ENCODE measurements at regions of chr4 and their contacts with region 1.

Region 1: DNA sequence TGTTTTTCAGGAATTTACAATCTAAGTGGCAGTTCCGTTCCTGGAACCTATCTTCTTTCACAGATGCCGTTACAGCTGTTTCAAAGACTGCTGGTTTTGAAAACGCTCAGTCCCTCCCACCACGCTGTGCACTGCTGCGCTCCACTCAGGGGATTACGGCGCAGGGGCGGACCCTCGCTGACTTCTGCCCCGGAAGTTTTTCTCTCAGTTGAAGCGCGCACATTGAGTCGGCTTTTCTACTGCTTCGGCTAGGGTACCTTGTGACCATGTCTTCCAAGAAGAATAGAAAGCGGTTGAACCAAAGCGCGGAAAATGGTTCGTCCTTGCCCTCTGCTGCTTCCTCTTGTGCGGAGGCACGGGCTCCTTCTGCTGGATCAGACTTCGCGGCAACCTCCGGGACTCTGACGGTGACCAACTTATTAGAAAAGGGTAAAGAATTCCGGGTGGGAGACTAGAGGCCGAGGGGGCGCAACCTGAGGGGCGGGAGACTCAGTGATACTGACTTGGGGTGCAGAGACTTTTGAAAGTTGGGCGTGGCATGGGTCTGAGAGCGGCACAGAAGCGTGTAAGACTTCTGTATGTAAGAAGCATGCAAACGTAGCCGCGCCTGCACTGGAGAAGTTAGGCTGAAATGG is 597 bp upstream of the NUDT6 start:
- DNase-seq: peak; percentile 70 to 73
- H3K4me3 ChIP-seq: peak overlapping the region; percentile 87
- H3K27ac ChIP-seq: peak overlapping the region; percentile 54
- H3K4me1 ChIP-seq: peaks cover 20% of the 10 kb centered on the region
- H3K27me3 ChIP-seq: no peaks in the 10 kb centered on the region
- CTCF ChIP-seq: no peak

Region 2: GRCh38 chr4:122602277-122603142 is 320.5 kb before region 1 on chr4:
- CTCF ChIA-PET with region 1: no interaction called
- POLR2A ChIA-PET with region 1: no interaction called
- intact Hi-C with region 1: loop called (anchors 2 kb)
- DNase-seq: peak in 1 of 2 experiments; percentile 6
- H3K4me3 ChIP-seq: no peak overlapping the region
- H3K27ac ChIP-seq: no peak overlapping the region
- H3K4me1 ChIP-seq: no peaks in the 10 kb centered on the region
- H3K27me3 ChIP-seq: 0 out of 2 replicates have a peak, but pooled peaks cover 6% of the 10 kb centered on the region
- CTCF ChIP-seq: peak; percentile 64

Region 3: DNA sequence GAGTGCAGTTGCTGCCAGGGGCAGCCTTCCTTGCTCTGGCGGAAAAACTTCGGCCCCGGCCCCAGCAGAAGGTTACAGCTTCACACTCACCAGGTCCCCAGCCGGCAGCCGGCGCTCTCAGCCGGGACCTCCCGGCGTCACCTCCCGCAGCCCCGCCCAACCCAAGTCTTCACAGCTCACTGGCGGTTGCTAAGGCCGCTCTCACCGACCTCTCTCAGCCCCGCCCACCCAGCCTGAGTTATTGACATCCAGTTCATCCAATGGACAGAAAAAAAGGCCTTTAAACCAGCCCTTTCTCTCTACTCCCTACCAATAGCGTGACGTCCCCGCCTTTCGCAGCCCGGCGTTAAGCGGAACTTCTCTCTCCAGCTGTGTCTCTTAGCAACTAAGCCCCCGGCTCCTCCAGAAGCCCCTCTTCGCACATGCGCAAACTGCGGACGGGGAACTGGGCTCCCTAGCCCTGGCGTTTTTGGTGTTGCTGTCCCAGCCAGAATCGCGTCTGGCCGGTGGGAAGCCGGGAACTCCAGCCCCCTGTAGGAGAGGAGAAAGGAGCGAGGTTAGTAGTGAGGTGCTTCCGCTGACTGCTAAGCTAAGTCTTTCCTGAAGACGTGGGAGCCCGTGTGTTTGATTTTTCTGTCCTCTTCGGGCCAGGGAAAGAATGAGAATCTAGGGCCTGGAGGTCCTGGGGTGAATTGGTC is 190.5 kb before region 1 on chr4 and contains the start of gene BBS12:
- CTCF ChIA-PET with region 1: no interaction called
- POLR2A ChIA-PET with region 1: no interaction called
- intact Hi-C with region 1: loop called (anchors 2 kb)
- DNase-seq: peak; percentile 99
- H3K4me3 ChIP-seq: peak within 1 kb of the TSS; percentile 62
- H3K27ac ChIP-seq: peak within 1 kb of the TSS; percentile 47
- H3K4me1 ChIP-seq: peaks cover 19% of the 10 kb centered on the region
- H3K27me3 ChIP-seq: no peaks in the 10 kb centered on the region
- CTCF ChIP-seq: no peak; the same call in 1 of the 2 replicates
- total RNA-seq, gene BBS12: 2.9 and 4.9 TPM in 2 replicates

Region 4: DNA sequence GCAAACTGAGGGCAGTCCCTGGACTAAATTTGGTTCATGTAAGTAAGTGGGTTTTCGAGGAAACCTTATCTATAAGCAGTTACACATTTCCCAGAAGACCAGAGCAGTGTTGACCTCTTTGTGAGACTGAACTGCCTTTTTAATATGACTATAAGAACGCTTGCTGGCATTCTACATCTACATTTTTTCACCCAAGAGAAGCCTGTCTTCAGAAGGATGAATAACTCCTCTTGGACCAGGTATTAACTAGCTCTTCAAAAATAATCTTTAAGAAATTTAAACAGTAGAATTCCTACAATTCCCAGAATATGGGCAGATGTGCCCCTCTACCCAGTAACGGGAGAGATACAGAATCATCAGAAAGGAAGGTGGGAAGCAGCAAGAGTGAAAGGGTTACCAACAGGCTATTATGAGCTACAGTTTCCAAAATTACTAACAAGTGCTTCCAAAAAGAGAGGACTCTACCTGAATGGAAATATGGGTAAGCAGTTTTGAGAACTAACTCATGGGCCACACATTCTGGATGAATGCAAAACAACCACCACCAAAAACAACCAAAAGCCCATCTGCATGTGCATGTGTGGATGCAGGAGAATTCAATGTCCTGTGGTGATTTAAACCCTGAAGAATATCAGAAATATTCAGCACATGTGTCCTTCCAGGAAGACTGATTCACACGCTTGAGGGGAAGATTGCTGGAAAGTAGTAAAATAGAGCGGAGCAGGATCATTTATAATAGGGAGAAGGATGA is 173.1 kb before region 1 on chr4:
- CTCF ChIA-PET with region 1: no interaction called
- POLR2A ChIA-PET with region 1: no interaction called
- intact Hi-C with region 1: no loop called
- DNase-seq: no peak
- H3K4me3 ChIP-seq: no peak overlapping the region
- H3K27ac ChIP-seq: no peak overlapping the region
- H3K4me1 ChIP-seq: no peaks in the 10 kb centered on the region
- H3K27me3 ChIP-seq: no peaks in the 10 kb centered on the region
- CTCF ChIP-seq: no peak

Region 5: GRCh38 chr4:122832732-122833131 is 90.3 kb before region 1 on chr4:
- CTCF ChIA-PET with region 1: interaction called, 13 read pairs
- POLR2A ChIA-PET with region 1: no interaction called
- intact Hi-C with region 1: no loop called
- DNase-seq: no peak
- H3K4me3 ChIP-seq: no peak overlapping the region
- H3K27ac ChIP-seq: no peak overlapping the region
- H3K4me1 ChIP-seq: 0 out of 2 replicates have a peak, but pooled peaks cover 7% of the 10 kb centered on the region
- H3K27me3 ChIP-seq: no peaks in the 10 kb centered on the region
- CTCF ChIP-seq: no peak

Region 6: DNA sequence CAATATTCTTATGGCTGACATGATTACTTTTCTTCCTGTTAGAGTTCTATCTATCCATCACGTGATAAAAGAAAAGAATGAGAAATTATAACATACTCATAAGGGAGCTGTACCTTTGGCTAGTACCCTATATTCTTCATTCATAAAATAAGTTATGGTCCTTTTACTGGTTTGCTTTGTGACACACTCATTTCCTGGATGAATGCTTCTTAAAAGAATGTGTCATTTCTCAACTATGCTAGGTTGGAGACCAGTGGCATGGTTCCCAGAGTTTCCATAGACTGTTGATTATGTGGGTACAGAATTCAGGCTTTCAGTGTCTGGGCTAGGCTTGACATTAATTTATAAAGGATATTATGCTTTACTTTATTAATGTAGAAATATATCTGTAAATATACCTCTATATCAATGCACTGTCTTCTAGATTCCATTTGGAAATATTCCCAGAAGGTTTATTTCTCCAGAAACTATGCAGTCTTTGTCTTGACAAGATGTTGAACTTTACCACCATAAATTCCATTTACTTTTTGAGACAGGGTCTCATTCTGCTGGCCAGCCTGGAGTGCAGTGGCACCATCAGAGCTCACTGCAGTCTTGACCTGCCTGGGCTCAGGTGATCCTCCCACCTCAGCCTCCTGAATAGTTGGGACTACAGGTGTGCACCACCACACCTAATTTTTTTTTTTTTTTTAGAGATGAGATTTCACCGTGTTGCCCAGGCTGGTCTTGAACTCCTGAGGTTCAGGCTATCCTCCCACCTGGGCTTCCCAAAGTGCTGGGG is 24.4 kb before region 1 on chr4:
- CTCF ChIA-PET with region 1: no interaction called
- POLR2A ChIA-PET with region 1: no interaction called
- intact Hi-C with region 1: loop called (anchors 1 kb)
- DNase-seq: peak; percentile 45 to 92
- H3K4me3 ChIP-seq: no peak overlapping the region
- H3K27ac ChIP-seq: peak overlapping the region; percentile 50
- H3K4me1 ChIP-seq: peaks cover 19% of the 10 kb centered on the region
- H3K27me3 ChIP-seq: no peaks in the 10 kb centered on the region
- CTCF ChIP-seq: no peak

Region 7: DNA sequence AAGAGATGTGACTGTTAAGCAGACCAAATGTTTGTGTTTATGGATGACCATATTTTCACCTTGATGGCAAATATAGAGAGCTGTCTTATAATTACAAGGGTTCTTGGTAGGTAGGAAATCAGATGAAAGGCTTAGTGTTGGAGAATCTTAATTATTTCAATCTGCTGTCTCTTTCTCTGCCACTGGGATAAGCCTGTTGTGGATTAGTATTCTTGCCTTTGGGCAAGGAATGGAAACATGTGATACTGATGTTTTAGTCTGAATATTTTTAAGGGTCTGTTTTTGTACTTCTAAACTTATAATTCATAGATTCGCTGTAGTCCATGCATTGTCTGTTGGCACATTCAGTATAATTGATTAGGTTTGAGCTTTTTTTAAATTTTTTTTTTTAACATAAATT is 23.1 kb after region 1 on chr4:
- CTCF ChIA-PET with region 1: no interaction called
- POLR2A ChIA-PET with region 1: no interaction called
- intact Hi-C with region 1: no loop called
- DNase-seq: no peak
- H3K4me3 ChIP-seq: no peak overlapping the region
- H3K27ac ChIP-seq: no peak overlapping the region
- H3K4me1 ChIP-seq: no peaks in the 10 kb centered on the region
- H3K27me3 ChIP-seq: no peaks in the 10 kb centered on the region
- CTCF ChIP-seq: no peak